ENCODE measurements at regions of chr11 and their contacts with region 1.

Region 1: DNA sequence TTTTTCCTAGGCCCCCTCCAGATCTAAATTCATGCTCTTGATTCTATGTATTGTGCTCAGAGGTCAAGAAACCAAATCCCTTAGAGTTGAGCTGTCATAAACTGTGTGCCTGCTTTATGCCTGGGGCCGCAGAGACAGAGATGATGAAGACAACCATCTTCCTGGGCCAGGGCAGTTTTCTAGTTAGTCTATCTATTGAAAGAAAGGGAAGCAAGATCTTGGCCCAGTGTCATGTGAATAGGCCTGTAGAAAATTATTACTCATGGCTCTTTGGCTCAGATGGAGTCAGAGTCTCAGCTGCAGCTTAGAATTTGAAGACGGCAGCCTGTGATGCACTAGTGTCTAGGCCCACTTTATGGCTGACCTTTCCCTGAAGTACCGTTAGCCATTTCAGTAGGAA is 112.1 kb downstream of the DBX1 start:
- DNase-seq: no peak
- ATAC-seq: peak in 2 of 4 donors; percentile 1 to 4
- H3K4me3 ChIP-seq: peak overlapping the region; percentile 7 to 65 (median 48)
- H3K27ac ChIP-seq: peak overlapping the region; percentile 69 to 96 (median 88)
- H3K4me1 ChIP-seq: peaks cover 0 to 53% (median 15%) of the 10 kb centered on the region in 12 donors
- H3K27me3 ChIP-seq: no peaks in the 10 kb centered on the region
- CTCF ChIP-seq: no peak
- POLR2A ChIP-seq: no peak

Region 2: DNA sequence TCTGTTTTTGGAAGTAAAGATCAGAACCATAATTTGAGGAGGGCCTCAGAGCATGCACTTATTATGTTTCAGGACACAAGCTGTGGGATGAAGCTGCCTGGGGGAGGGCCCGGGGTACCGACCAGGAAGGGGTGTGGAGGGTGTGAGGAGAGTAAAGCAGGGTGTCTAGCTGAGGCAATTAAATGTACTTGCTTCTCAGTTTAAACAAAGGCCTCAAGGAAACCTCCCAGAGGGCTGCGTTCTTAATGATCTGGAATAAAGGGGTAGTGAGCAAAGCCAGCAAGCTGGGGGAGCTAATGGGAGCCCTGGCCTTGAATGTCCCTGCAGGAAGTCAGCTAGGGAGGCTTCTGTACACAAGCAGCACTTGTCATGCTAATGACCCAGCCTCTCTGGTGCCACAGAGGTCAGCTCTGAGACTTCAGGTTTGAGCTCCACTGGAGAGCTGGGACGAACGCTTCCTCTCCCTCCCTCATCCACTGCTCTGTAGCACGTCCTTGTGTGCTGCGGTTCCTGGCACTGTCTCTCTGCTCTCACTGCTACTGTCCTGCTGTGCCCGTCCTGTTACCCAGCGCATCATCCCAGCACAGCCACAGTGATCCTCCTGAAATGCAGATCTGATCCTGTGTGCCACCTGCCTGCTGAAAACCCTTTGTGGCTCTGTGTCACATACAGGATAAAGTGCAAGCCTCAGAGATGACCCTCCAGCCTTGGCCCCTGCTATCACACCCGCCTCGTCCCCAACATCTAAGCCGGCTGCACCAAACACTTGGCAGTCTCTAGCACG is 47.7 kb before region 1 on chr11:
- intact Hi-C with region 1: loop called in 3 of 10 experiments (anchors 5 kb)
- DNase-seq: peak in 4 of 5 donors; percentile 28 to 65 (median 42)
- ATAC-seq: peak; percentile 73 to 84 (median 78)
- H3K4me3 ChIP-seq: no peak overlapping the region
- H3K27ac ChIP-seq: peak overlapping the region in 11 of 12 donors; percentile 9 to 73 (median 57)
- H3K4me1 ChIP-seq: peaks cover 0 to 59% (median 22%) of the 10 kb centered on the region in 12 donors
- H3K27me3 ChIP-seq: no peaks in the 10 kb centered on the region
- CTCF ChIP-seq: peak in 1 of 12 donors; percentile 10
- POLR2A ChIP-seq: no peak

Region 3: GRCh38 chr11:20110908-20111669 is 62.9 kb after region 1 on chr11:
- intact Hi-C with region 1: loop called in 1 of 10 experiments (anchors 5 kb)
- DNase-seq: no peak
- ATAC-seq: peak; percentile 4 to 29 (median 16)
- H3K4me3 ChIP-seq: no peak overlapping the region
- H3K27ac ChIP-seq: peak overlapping the region in 10 of 12 donors; percentile 58 to 87 (median 78)
- H3K4me1 ChIP-seq: peaks cover 0 to 26% (median 18%) of the 10 kb centered on the region in 12 donors
- H3K27me3 ChIP-seq: no peaks in the 10 kb centered on the region
- CTCF ChIP-seq: peak; percentile 70 to 87 (median 78)
- POLR2A ChIP-seq: no peak

Region 4: GRCh38 chr11:20158597-20159257 is 110.5 kb after region 1 on chr11:
- intact Hi-C with region 1: no loop called
- DNase-seq: peak; percentile 47 to 70 (median 49)
- ATAC-seq: peak in 3 of 4 donors; percentile 84 to 85 (median 84)
- H3K4me3 ChIP-seq: no peak overlapping the region
- H3K27ac ChIP-seq: no peak overlapping the region
- H3K4me1 ChIP-seq: peaks cover 0 to 36% (median 20%) of the 10 kb centered on the region in 12 donors
- H3K27me3 ChIP-seq: peaks cover 61 to 100% (median 93%) of the 10 kb centered on the region in 9 donors
- CTCF ChIP-seq: no peak
- POLR2A ChIP-seq: no peak

Measured in heart left ventricle (tissue), 16 donors.